ENCODE measurements at regions of chr6 and their contacts with region 1.

Region 1: GRCh38 chr6:90393232-90393884 is 96.7 kb upstream of the BACH2 start:
- DNase-seq: peak; percentile 93
- H3K4me3 Mint-ChIP-seq: no peak overlapping the region
- H3K27ac Mint-ChIP-seq: peak overlapping the region; percentile 35
- H3K4me1 Mint-ChIP-seq: peaks cover 60% of the 10 kb centered on the region
- H3K27me3 Mint-ChIP-seq: no peaks in the 10 kb centered on the region

Region 2: GRCh38 chr6:90103056-90103800 is 290.1 kb before region 1 on chr6:
- intact Hi-C with region 1: loop called (anchors 1 kb)
- DNase-seq: peak; percentile 73
- H3K4me3 Mint-ChIP-seq: peak overlapping the region; percentile 64
- H3K27ac Mint-ChIP-seq: peak overlapping the region; percentile 88
- H3K4me1 Mint-ChIP-seq: peaks cover 60% of the 10 kb centered on the region
- H3K27me3 Mint-ChIP-seq: no peaks in the 10 kb centered on the region

Region 3: DNA sequence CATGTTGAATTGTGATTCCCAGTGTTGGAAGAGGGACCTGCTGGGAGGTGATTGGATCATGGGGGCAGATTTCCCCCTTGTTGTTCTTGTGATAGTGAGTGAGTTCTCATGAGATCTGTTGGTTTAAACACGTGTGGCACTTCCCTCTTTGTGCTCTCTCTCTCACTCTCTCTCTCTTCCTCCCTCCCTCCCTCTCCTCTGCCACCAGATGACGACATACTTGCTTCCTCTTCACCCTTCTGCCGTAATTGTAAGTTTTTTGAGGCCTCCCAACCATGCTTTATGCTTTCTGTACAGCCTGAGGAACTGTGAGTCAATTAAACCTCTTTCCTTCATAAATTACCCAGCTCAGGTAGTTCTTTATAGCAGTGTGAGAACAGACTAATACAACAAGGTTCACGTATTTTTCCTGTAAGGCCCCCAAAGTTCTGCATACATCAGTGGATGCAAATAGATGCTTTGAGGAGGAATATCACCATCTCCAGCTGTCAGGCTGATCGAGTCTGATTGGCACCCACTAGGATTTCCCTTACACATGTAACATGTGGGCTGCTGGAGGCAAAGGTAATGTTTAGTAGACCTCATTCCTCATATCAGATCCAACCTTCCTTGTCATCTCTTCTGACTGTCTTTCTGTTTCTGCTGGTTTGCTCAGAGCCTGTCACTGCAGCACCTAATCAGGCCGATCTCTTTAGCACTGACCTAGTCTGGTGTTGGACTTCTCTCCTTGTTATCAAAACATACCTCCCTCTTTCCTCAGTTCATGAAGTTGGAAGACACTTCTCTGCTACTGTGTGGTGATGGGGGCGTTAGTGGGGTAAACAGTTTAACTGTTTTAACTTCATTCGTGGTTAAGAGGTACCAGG is 42.4 kb before region 1 on chr6:
- intact Hi-C with region 1: loop called (anchors 1 kb)
- DNase-seq: peak; percentile 83
- H3K4me3 Mint-ChIP-seq: peak overlapping the region; percentile 42
- H3K27ac Mint-ChIP-seq: peak overlapping the region; percentile 90
- H3K4me1 Mint-ChIP-seq: peaks cover 37% of the 10 kb centered on the region
- H3K27me3 Mint-ChIP-seq: peaks cover 5% of the 10 kb centered on the region

Region 4: DNA sequence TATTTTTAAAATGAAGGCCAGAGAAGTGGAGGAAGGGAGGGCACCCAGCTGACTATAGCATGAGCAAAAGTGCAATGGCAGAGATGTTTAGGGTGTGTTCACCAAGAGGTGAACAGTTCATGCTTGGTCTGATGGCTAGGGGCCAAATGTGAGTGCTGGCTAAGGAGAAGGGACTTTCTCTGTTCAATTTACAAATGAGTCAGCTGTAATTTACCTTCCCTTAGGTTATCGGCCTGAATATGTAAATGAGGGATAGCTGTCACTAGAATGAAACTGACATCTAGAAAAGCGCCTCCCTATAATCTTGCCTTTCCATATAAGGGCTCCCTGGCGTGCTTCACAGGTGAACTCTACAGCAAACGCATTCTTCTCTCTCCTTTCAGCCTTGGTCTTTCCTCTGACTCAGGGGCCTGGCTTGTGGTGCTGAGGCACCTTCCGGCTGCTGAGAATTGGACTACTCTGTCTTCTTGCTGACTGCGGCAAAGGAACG is 18.0 kb after region 1 on chr6:
- intact Hi-C with region 1: loop called (anchors 1 kb)
- DNase-seq: peak; percentile 86
- H3K4me3 Mint-ChIP-seq: peak overlapping the region; percentile 18
- H3K27ac Mint-ChIP-seq: peak overlapping the region; percentile 84
- H3K4me1 Mint-ChIP-seq: peaks cover 71% of the 10 kb centered on the region
- H3K27me3 Mint-ChIP-seq: peaks cover 2% of the 10 kb centered on the region

Region 5: DNA sequence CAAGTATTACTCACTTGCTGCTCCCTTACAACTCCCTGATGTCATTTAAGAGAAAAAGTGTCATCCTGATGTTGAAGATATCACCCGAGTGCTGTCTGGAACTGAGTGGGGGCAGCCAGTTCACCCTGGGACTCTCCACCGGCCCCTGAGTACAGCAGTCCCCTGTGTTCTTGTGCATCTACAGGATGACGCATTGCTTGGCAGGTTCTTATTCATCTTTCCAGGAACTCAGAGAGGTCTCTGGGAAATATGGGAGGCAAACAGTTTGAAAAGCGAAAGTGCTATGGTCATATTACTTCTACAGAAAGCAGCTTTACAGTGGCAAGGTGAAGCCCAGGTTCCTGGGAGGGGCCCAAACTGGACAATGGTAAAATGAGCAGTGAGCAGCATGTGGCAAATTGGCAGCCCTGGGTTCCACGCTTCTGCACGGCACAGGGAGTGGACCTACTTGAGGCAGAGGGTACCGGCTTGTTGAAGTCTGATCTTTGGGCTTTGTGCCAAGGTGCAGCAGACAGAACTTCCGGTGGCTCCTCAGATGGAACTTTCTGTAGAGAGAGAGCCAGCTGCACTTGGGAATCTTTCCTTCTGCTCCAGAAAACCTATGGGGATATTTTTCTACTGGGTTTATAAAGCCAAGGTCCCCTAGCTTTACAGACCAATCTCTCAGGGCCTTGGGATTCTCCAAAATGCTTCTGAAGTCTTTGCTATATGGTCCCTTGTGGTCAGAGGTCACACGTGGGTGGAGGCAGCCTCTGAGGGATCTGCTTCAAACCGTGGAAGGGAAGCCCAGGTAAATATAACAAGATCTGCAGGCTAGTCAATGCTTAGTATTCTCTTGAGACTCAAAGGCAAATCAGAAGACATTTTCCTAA is 65.2 kb after region 1 on chr6:
- intact Hi-C with region 1: loop called (anchors 1 kb)
- DNase-seq: peak; percentile 88
- H3K4me3 Mint-ChIP-seq: peak overlapping the region; percentile 54
- H3K27ac Mint-ChIP-seq: peak overlapping the region; percentile 91
- H3K4me1 Mint-ChIP-seq: peaks cover 66% of the 10 kb centered on the region
- H3K27me3 Mint-ChIP-seq: no peaks in the 10 kb centered on the region

Region 6: DNA sequence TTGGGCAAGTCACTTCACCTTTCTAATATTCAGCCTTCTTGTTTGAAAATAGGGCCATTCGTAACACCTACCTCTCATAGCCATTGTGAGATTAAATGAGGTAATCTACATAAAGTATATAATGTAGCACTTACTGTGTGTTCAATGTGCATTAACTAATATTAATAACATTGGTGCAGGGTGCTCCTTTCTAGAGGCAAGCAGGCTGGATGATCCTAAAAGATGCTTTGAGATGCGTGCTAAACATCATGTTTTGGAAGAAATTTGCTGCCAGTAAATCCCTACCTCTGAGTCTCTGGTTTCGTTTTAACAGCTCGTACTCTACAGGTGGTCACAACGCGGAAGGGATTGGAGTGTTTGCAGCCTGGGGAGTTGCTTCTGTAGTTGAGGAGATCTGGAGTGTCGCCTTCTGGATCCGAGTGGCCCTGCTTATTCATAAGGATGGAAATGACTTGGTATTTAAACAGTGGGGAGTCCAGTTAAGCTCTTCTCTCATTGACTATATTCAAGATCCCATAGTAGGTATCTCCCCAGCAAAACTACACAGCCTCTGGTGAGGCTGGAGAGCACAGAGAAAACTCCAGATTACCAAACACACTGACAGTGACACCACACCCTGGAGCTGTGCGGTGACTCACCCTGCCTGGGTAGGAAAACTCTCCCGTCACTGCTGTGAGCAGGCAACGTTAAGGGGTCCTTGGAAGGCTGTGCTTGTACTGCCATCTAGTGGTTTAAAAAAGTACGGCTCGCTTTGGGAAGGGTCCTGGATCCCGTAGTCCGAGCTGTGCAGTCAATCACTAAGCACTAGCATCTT is 85.6 kb after region 1 on chr6:
- intact Hi-C with region 1: loop called (anchors 1 kb)
- DNase-seq: peak; percentile 95
- H3K4me3 Mint-ChIP-seq: peak overlapping the region; percentile 48
- H3K27ac Mint-ChIP-seq: peak overlapping the region; percentile 71
- H3K4me1 Mint-ChIP-seq: peaks cover 51% of the 10 kb centered on the region
- H3K27me3 Mint-ChIP-seq: no peaks in the 10 kb centered on the region

Region 7: GRCh38 chr6:90516074-90516660 is 122.8 kb after region 1 on chr6:
- intact Hi-C with region 1: no loop called
- DNase-seq: no peak
- H3K4me3 Mint-ChIP-seq: no peak overlapping the region
- H3K27ac Mint-ChIP-seq: no peak overlapping the region
- H3K4me1 Mint-ChIP-seq: no peaks in the 10 kb centered on the region
- H3K27me3 Mint-ChIP-seq: no peaks in the 10 kb centered on the region